ENCODE measurements at regions of chr14 and their contacts with region 1.

Region 1: DNA sequence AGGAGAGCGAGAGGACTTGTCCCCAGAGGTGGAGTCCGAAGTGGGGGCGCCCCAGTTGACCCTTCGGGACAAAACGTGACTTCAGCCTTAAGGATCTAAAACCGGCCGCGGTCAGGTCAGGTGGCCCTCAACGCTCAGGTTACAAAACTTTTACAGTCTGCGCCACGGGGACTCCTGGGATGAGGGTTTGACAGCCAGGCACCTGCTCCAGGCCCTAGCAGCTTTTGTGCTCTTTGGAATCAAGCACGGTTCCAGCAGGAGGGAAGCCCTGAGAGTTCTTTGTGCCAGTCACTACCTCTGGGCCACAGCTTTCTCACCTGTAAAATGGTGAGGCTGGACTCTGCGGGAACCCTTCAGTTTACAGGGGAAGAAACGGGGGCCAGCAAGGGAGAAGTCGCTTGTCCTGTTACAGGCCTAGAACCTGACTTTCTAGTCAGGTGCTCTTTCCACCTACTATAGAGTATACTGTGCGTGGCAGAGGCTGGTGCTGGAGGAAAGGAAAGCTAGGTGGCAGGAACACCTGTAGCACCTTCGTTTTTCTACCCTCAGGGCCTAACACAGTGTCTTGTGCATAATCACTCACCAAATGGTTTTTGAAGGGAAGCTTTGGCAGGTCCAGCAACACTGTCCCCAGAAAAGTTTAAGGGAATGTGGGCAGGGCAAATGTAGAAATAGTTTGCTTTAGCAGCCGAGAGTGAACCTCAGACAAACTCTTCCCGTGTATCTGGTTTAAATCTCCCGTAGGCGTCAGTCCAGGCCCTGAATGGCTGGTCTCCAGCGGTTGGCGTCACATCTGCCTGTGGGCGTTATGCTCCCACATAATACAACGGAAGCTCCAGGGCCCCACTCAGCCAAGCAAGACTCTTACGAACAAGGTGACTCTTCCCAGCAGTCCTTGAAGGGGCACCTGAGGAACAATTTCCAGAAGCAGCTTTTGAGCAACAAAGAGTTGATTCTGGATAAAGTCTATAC is 656 bp downstream of the ZC2HC1C start:
- ATAC-seq: peak in 5 of 8 experiments; percentile 1 to 13 (median 9)
- H3K4me3 ChIP-seq: peak overlapping the region; percentile 47 to 60 (median 56)
- H3K27ac ChIP-seq: peak overlapping the region; percentile 28 to 65
- H3K4me1 ChIP-seq: peaks cover 5 to 12% of the 10 kb centered on the region in 2 donors

Region 2: GRCh38 chr14:74932401-74932901 is 137.6 kb before region 1 on chr14:
- in situ Hi-C with region 1: loop called in 2 of 9 experiments (anchors 10 to 25 kb)
- ATAC-seq: peak in 3 of 8 experiments; percentile 39 to 67 (median 51)
- H3K4me3 ChIP-seq: no peak overlapping the region
- H3K27ac ChIP-seq: no peak overlapping the region
- H3K4me1 ChIP-seq: peaks cover 10 to 12% of the 10 kb centered on the region in 2 donors

Measured in motor neuron (in vitro differentiated cells).